Lower leg skin (tissue), 4 donors: ENCODE measurements at regions of chr3 and their contacts with region 1.

Region 1: DNA sequence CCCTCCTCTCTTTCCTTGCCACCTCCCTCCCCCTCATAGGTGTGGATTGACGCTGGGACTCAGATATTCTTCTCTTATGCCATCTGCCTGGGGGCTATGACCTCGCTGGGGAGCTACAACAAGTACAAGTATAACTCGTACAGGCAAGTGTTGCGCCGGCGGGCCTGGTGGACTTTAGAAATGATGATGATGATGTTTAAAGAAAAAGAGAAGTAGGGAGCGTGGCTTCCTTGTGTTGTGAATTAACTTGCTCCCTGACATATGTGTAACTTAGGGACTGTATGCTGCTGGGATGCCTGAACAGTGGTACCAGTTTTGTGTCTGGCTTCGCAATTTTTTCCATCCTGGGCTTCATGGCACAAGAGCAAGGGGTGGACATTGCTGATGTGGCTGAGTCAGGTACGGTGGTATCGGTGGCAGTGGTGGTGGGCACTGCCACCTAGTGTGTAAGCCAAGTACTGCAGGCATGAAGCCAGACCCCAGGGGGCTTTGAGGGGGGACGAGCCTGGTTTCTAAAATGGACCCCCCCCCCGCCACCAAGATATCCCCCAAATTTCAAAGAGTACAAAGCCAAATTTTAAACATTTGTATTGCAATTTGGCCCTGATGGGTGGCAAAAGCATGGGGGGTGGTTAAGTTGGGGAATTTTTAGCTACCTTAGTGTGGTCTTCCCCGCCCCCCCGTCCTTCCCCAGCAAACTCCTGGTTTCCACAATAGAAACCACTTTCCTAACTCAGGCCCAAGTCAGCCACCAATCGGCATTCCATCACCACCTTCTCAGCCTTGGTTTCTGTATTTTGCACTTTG is 65.6 kb downstream of the SLC6A6 start:
- DNase-seq: no peak
- H3K4me3 ChIP-seq: no peak overlapping the region
- CTCF ChIP-seq: peak in 1 of 3 donors; percentile 57
- POLR2A ChIP-seq: no peak

Region 2: DNA sequence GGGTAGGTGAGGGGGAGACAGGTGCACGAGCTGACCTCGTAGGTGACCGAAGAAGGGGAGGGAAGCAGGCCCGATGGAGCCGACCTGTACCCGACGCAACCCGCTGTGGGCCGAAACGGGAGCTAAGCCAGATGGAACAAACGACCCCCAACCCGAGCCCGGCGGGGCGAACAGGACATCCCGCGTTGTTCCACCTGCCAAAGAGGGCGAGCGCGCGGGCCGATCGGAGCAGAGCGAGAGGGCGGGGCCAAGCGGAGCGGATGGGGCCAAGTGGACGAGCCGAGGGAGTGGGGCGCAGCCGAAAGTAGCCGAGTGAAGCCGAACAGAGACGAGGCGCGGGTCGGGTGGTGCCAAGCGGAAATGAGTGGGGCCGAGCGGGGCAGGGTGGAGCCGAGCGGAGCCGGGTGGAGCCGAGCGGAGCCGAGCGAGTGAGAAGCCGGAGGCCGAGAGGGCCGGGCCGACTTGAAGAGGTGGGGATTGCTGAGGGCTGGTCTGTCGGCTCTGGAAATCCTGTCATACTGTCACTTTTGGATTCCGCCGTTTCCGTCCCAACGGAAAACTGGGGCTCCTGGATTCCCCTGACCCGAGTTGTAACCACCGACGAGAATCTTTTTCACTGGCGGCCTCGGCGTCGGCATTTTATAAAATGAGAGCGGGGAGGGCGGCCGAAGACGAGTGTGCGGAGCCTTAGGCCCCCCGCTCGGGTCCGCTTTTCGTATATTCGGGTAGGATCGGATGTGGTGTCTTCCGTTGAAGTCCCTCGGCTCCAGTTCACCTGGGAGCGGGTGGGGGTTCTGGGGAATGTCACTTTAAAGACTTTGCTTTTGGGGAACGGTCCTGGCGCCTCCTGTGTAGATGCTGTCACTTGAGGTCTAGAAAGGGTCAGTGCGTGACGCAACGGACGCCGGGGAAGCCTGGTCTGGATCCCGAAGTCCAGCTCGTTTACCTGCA is 572.6 kb before region 1 on chr3:
- intact Hi-C with region 1: loop called (anchors 5 kb)
- DNase-seq: peak; percentile 94 to 99
- H3K4me3 ChIP-seq: peak overlapping the region; percentile 51
- CTCF ChIP-seq: no peak
- POLR2A ChIP-seq: no peak

Region 3: GRCh38 chr3:13954741-13955483 is 513.1 kb before region 1 on chr3:
- intact Hi-C with region 1: no loop called
- DNase-seq: no peak
- H3K4me3 ChIP-seq: no peak overlapping the region
- CTCF ChIP-seq: no peak
- POLR2A ChIP-seq: no peak

Region 4: GRCh38 chr3:14261229-14261628 is 206.8 kb before region 1 on chr3:
- intact Hi-C with region 1: loop called (anchors 5 kb)
- DNase-seq: peak; percentile 83 to 97
- H3K4me3 ChIP-seq: no peak overlapping the region
- CTCF ChIP-seq: peak in 1 of 3 donors; percentile 80
- POLR2A ChIP-seq: no peak